Common myeloid progenitor, CD34-positive (primary cell): ENCODE measurements at regions of chr20 and their contacts with region 1.

Region 1: GRCh38 chr20:19583532-19584175 is 174.4 kb upstream of the RIN2 start:
- DNase-seq: peak; percentile 59 to 79 (median 72)
- H3K4me3 ChIP-seq: no peak overlapping the region
- H3K27ac ChIP-seq: no peak overlapping the region
- H3K4me1 ChIP-seq: no peaks in the 10 kb centered on the region
- H3K27me3 ChIP-seq: no peaks in the 10 kb centered on the region

Region 2: DNA sequence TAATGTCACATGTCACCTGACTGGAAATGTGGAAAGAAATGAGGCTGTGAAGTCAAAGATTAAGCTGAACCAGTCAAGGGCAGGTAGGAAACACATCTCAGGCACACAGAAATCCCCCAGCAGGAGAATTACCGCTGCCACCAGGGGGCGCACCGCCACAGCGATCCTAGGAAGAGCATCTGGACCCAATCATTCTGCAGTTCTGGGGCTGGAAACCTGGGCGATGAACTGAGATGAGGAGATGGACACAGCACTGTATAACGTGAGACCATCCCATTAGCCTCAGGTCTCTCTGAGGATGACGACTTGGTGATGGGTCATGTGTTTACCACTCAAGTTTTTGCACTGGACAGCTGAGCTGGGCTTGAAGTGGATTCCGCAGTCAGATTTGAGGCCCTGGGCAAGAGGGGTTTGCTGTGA is 377.7 kb before region 1 on chr20:
- CTCF ChIA-PET with region 1: interaction called, 65 read pairs
- POLR2A ChIA-PET with region 1: interaction called, 3 read pairs
- DNase-seq: peak; percentile 53 to 73 (median 70)
- H3K4me3 ChIP-seq: no peak overlapping the region
- H3K27ac ChIP-seq: no peak overlapping the region
- H3K4me1 ChIP-seq: no peaks in the 10 kb centered on the region
- H3K27me3 ChIP-seq: peaks cover 0 to 2% (median 0%) of the 10 kb centered on the region in 5 experiments

Region 3: GRCh38 chr20:19212821-19213502 is 370.7 kb before region 1 on chr20:
- CTCF ChIA-PET with region 1: interaction called, 65 read pairs
- POLR2A ChIA-PET with region 1: no interaction called
- DNase-seq: peak; percentile 77 to 91 (median 85)
- H3K4me3 ChIP-seq: peak overlapping the region; percentile 44 to 83 (median 59)
- H3K27ac ChIP-seq: no peak overlapping the region
- H3K4me1 ChIP-seq: peaks cover 0 to 16% (median 15%) of the 10 kb centered on the region in 4 experiments
- H3K27me3 ChIP-seq: peaks cover 0 to 5% (median 4%) of the 10 kb centered on the region in 5 experiments

Region 4: GRCh38 chr20:19571996-19572395 is 11.7 kb before region 1 on chr20:
- CTCF ChIA-PET with region 1: interaction called, 12 read pairs
- POLR2A ChIA-PET with region 1: no interaction called
- DNase-seq: no peak
- H3K4me3 ChIP-seq: no peak overlapping the region
- H3K27ac ChIP-seq: no peak overlapping the region
- H3K4me1 ChIP-seq: peaks cover 0 to 10% (median 7%) of the 10 kb centered on the region in 4 experiments
- H3K27me3 ChIP-seq: no peaks in the 10 kb centered on the region

Region 5: GRCh38 chr20:19605786-19606485 is 22.3 kb after region 1 on chr20:
- CTCF ChIA-PET with region 1: no interaction called
- POLR2A ChIA-PET with region 1: no interaction called
- DNase-seq: no peak
- H3K4me3 ChIP-seq: no peak overlapping the region
- H3K27ac ChIP-seq: no peak overlapping the region
- H3K4me1 ChIP-seq: no peaks in the 10 kb centered on the region
- H3K27me3 ChIP-seq: no peaks in the 10 kb centered on the region